Ovary (tissue), 10 donors: ENCODE measurements at regions of chr10 and their contacts with region 1.

Region 1: GRCh38 chr10:63720072-63720537 is 198.9 kb downstream of the REEP3 start:
- DNase-seq: peak in 1 of 5 donors; percentile 60
- H3K4me3 ChIP-seq: no peak overlapping the region
- H3K27ac ChIP-seq: no peak overlapping the region
- H3K4me1 ChIP-seq: no peaks in the 10 kb centered on the region
- H3K27me3 ChIP-seq: no peaks in the 10 kb centered on the region
- CTCF ChIP-seq: peak; percentile 81 to 95 (median 92)
- EP300 ChIP-seq: no peak
- POLR2A ChIP-seq: no peak

Region 2: GRCh38 chr10:63166742-63167258 is 553.3 kb before region 1 on chr10:
- intact Hi-C with region 1: loop called (anchors 5 to 10 kb)
- DNase-seq: peak in 1 of 5 donors; percentile 33
- H3K4me3 ChIP-seq: no peak overlapping the region
- H3K27ac ChIP-seq: no peak overlapping the region
- H3K4me1 ChIP-seq: peaks cover 4% of the 10 kb centered on the region
- H3K27me3 ChIP-seq: no peaks in the 10 kb centered on the region
- CTCF ChIP-seq: peak; percentile 69 to 86 (median 74)
- EP300 ChIP-seq: no peak
- POLR2A ChIP-seq: no peak

Region 3: GRCh38 chr10:63788152-63788821 is 68.2 kb after region 1 on chr10:
- intact Hi-C with region 1: no loop called
- DNase-seq: no peak
- H3K4me3 ChIP-seq: no peak overlapping the region
- H3K27ac ChIP-seq: no peak overlapping the region
- H3K4me1 ChIP-seq: no peaks in the 10 kb centered on the region
- H3K27me3 ChIP-seq: no peaks in the 10 kb centered on the region
- CTCF ChIP-seq: no peak
- EP300 ChIP-seq: no peak
- POLR2A ChIP-seq: no peak

Region 4: DNA sequence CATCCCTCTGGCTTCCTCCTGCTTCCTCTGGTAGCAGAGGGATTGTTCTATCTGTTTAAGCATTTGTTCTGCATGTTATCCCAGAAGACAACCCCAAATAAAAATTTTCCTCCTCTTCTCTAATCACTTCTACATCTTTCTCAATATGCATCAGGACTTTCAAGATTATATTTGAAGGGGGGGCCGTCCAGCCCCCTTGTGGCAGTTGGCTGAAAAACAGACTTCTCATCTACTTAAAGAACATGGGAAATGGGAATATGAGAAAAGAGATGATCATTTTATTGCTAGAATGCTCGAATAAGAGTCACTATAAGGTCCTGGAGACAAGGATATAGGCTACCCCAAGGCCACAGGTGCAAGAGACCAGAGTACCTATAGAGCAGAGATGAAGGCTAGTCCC is 267.1 kb after region 1 on chr10:
- intact Hi-C with region 1: no loop called
- DNase-seq: no peak
- H3K4me3 ChIP-seq: no peak overlapping the region
- H3K27ac ChIP-seq: no peak overlapping the region
- H3K4me1 ChIP-seq: no peaks in the 10 kb centered on the region
- H3K27me3 ChIP-seq: no peaks in the 10 kb centered on the region
- CTCF ChIP-seq: no peak
- EP300 ChIP-seq: no peak
- POLR2A ChIP-seq: no peak